Right cardiac atrium (tissue), 5 donors: ENCODE measurements at regions of chr11 and their contacts with region 1.

Region 1: GRCh38 chr11:109547356-109548027 is 125.5 kb downstream of the C11orf87 start:
- DNase-seq: no peak
- ATAC-seq: no peak
- H3K4me3 ChIP-seq: no peak overlapping the region
- H3K27ac ChIP-seq: no peak overlapping the region
- H3K4me1 ChIP-seq: no peaks in the 10 kb centered on the region
- H3K27me3 ChIP-seq: no peaks in the 10 kb centered on the region

Region 2: DNA sequence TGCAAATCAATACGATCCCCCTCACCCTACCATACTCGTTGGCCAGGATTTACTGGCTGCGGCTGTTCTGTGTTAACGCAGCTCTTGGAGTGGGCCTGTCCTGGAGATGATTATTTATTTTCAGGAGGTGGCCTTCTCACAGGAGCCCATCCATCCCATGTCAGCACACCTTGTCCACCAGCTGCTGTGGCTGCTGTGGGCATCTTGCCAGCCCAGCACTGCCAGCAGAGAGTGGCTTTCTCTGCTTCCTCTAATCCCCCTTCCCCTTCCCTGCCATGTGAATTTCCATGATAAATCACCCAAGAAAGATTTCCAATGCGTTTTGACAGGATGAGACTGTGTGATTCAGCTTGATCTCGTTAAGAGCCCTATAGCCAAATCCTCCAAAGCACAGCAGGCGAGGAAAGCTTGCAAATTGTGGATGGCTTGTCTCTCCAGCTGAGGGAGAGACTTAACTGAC is 434.6 kb before region 1 on chr11:
- intact Hi-C with region 1: no loop called
- DNase-seq: peak in 1 of 3 donors; percentile 32
- ATAC-seq: no peak
- H3K4me3 ChIP-seq: no peak overlapping the region
- H3K27ac ChIP-seq: no peak overlapping the region
- H3K4me1 ChIP-seq: no peaks in the 10 kb centered on the region
- H3K27me3 ChIP-seq: no peaks in the 10 kb centered on the region

Region 3: GRCh38 chr11:109285465-109285864 is 262.0 kb before region 1 on chr11:
- intact Hi-C with region 1: no loop called
- DNase-seq: no peak
- ATAC-seq: no peak
- H3K4me3 ChIP-seq: no peak overlapping the region
- H3K27ac ChIP-seq: no peak overlapping the region
- H3K4me1 ChIP-seq: no peaks in the 10 kb centered on the region
- H3K27me3 ChIP-seq: no peaks in the 10 kb centered on the region

Region 4: DNA sequence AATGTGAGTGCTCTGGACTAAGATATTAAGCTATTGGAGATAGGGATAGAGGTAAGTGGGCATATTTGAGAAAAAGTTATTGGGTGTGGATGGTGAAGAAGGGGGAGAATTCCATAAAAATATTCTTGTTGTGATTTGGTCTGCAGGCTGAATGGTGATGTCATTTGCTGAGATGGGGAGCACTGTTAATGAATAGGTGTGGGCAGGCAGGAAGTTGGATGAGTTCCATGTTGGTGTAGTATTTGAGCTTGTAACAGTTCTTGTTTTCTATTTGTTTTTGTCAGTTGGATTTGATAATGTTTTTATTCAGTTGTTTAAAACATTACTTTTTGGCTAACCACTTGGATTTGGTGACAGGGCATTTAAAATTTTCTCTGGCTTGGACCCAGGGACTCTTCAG is 43.3 kb after region 1 on chr11:
- intact Hi-C with region 1: loop called in 1 of 4 experiments (anchors 5 kb)
- DNase-seq: no peak
- ATAC-seq: no peak
- H3K4me3 ChIP-seq: no peak overlapping the region
- H3K27ac ChIP-seq: no peak overlapping the region
- H3K4me1 ChIP-seq: no peaks in the 10 kb centered on the region
- H3K27me3 ChIP-seq: no peaks in the 10 kb centered on the region